ENCODE measurements at regions of chr2 and their contacts with region 1.

Region 1: GRCh38 chr2:64988420-64989125 is 626 bp upstream of the SLC1A4 start:
- DNase-seq: peak; percentile 62
- ATAC-seq: peak; percentile 43
- H3K4me3 Mint-ChIP-seq: peak overlapping the region; percentile 85
- H3K27ac Mint-ChIP-seq: peak overlapping the region; percentile 87
- H3K4me1 Mint-ChIP-seq: peaks cover 40% of the 10 kb centered on the region
- H3K27me3 Mint-ChIP-seq: no peaks in the 10 kb centered on the region
- CTCF ChIP-seq: no peak

Region 2: GRCh38 chr2:64192125-64192479 is 796.5 kb before region 1 on chr2:
- CTCF ChIA-PET with region 1: no interaction called
- POLR2A ChIA-PET with region 1: no interaction called
- intact Hi-C with region 1: no loop called
- DNase-seq: no peak
- ATAC-seq: peak; percentile 83
- H3K4me3 Mint-ChIP-seq: peak overlapping the region; percentile 50
- H3K27ac Mint-ChIP-seq: peak overlapping the region; percentile 50
- H3K4me1 Mint-ChIP-seq: peaks cover 41% of the 10 kb centered on the region
- H3K27me3 Mint-ChIP-seq: no peaks in the 10 kb centered on the region
- CTCF ChIP-seq: no peak

Region 3: DNA sequence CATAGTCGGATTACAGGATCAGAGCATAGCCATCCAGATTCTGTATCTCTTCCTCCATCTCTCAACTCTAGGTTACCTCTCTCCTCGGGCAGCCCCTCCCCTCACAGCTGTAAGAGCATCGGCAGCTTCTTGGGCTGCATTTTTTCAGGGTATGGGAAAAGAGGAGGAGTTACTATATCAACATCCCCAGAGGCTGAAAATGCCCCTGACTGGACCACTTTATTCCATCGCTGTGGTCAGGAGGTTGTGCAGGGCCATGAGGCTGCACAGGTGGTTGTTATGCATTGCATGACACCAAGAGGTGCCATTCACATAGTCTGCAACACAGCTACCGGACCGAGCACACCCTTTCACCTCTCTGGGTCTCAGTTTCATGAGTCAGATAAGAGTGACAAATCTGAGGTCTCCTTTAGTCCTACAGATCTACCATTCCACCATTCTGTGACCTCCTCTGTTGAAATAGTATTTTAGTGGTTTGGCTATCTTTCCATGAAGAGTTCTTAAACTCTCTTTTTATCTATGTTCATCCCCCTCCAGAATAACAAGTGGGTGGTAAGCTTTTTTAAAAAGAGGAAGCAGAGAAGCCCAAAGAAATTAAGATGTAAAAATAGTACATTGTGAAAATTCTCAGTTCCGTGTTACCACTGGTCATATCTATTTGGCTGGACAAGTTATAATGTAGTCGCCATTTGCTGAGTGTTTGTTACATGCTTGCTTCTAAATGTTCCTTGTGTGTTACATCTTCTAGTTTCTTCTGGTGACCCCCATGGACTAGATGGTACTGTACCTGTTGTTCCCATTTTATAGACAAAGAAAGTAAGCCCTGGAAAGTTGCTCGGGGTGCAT is 56.0 kb before region 1 on chr2:
- CTCF ChIA-PET with region 1: interaction called, 5 read pairs
- POLR2A ChIA-PET with region 1: interaction called, 47 read pairs
- intact Hi-C with region 1: loop called (anchors 1 kb)
- DNase-seq: no peak
- ATAC-seq: peak; percentile 81
- H3K4me3 Mint-ChIP-seq: peak overlapping the region; percentile 90
- H3K27ac Mint-ChIP-seq: peak overlapping the region; percentile 93
- H3K4me1 Mint-ChIP-seq: peaks cover 97% of the 10 kb centered on the region
- H3K27me3 Mint-ChIP-seq: no peaks in the 10 kb centered on the region
- CTCF ChIP-seq: no peak

Region 4: GRCh38 chr2:64945973-64946768 is 42.4 kb before region 1 on chr2:
- CTCF ChIA-PET with region 1: interaction called, 6 read pairs
- POLR2A ChIA-PET with region 1: interaction called, 35 read pairs
- intact Hi-C with region 1: loop called (anchors 1 kb)
- DNase-seq: peak; percentile 61
- ATAC-seq: peak; percentile 93
- H3K4me3 Mint-ChIP-seq: peak overlapping the region; percentile 78
- H3K27ac Mint-ChIP-seq: peak overlapping the region; percentile 93
- H3K4me1 Mint-ChIP-seq: peaks cover 69% of the 10 kb centered on the region
- H3K27me3 Mint-ChIP-seq: no peaks in the 10 kb centered on the region
- CTCF ChIP-seq: no peak

Region 5: DNA sequence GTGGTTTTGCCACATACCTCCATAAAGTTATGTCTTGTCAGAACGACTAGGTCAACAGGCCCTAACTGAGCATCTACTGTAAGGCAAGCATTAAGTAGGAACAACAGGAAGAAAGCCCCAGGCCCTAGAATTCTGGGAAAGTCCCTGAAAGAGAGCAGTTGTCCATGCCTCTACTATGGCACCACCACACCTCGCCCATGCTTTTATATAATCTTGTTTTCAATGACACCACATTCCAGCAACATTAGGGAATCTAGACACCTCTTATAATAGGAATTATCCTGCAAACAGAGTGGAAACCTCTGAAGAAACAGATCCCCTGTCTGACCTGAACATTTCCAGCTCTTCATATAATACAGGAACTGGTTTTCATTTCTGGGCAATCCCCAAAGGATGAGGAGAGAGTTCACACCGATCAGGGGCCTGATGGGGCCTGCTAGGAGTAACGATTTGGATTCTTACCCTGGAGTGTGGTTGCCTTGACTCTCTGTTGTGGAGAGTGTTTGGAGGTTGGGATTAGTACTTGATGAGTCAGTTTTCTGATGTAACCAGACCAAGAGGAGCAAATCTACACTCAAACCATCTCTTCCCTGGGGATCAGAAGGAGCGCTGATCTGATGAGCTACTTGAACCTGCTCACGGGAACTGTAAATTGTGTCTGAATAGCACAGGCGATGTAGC is 35.7 kb after region 1 on chr2:
- CTCF ChIA-PET with region 1: interaction called, 3 read pairs
- POLR2A ChIA-PET with region 1: interaction called, 76 read pairs
- intact Hi-C with region 1: loop called (anchors 1 kb)
- DNase-seq: no peak
- ATAC-seq: no peak
- H3K4me3 Mint-ChIP-seq: peak overlapping the region; percentile 29
- H3K27ac Mint-ChIP-seq: peak overlapping the region; percentile 63
- H3K4me1 Mint-ChIP-seq: peaks cover 58% of the 10 kb centered on the region
- H3K27me3 Mint-ChIP-seq: no peaks in the 10 kb centered on the region
- CTCF ChIP-seq: no peak

Region 6: DNA sequence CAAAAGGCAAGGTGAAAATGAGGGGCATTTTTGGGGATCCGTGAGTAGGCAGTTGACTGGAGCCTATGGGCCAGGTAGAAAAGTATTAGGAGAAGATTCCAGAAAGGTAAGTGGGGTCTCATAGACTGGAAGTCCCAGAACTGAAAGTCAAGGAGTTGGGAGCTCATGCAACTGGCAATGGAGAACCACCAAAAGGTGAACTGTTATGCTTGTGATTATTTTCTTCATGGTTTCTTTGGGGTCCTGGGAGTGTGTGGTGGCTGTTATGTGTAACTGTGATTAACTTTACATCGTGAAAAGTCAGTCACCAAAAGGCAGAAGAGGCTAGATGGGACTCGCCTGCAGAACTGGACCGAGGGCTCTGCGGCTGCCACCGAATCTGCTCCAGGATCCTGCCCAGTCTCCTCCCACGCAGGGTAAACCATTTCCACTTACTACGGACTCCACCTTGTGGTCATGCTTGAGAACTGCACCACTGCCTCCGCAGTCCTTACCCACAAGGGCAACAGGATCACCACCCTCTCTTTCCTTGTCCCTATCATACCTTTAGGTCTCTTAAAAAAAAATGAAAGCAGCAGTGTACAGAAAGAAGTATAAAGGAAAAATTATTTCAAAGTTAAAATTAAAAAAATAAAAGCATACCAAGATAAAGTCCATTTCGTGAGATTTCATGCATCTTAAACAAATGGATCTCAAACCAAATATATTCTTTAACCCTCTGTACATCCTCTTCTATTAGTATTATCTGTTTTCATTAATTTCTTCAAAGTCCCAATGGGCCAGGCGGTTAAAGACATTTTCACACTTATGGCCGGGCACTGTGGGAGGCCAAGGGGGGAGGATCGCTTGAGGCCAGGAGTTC is 52.1 kb after region 1 on chr2:
- CTCF ChIA-PET with region 1: interaction called, 3 read pairs
- POLR2A ChIA-PET with region 1: interaction called, 4 read pairs
- intact Hi-C with region 1: loop called (anchors 2 kb)
- DNase-seq: peak; percentile 59
- ATAC-seq: peak; percentile 99
- H3K4me3 Mint-ChIP-seq: no peak overlapping the region
- H3K27ac Mint-ChIP-seq: peak overlapping the region; percentile 20
- H3K4me1 Mint-ChIP-seq: peaks cover 11% of the 10 kb centered on the region
- H3K27me3 Mint-ChIP-seq: no peaks in the 10 kb centered on the region
- CTCF ChIP-seq: peak; percentile 55

Region 7: GRCh38 chr2:65116645-65117044 is 128.1 kb after region 1 on chr2:
- CTCF ChIA-PET with region 1: no interaction called
- POLR2A ChIA-PET with region 1: interaction called, 10 read pairs
- intact Hi-C with region 1: no loop called
- DNase-seq: no peak
- ATAC-seq: no peak
- H3K4me3 Mint-ChIP-seq: no peak overlapping the region
- H3K27ac Mint-ChIP-seq: no peak overlapping the region
- H3K4me1 Mint-ChIP-seq: peaks cover 70% of the 10 kb centered on the region
- H3K27me3 Mint-ChIP-seq: no peaks in the 10 kb centered on the region
- CTCF ChIP-seq: no peak

Region 8: DNA sequence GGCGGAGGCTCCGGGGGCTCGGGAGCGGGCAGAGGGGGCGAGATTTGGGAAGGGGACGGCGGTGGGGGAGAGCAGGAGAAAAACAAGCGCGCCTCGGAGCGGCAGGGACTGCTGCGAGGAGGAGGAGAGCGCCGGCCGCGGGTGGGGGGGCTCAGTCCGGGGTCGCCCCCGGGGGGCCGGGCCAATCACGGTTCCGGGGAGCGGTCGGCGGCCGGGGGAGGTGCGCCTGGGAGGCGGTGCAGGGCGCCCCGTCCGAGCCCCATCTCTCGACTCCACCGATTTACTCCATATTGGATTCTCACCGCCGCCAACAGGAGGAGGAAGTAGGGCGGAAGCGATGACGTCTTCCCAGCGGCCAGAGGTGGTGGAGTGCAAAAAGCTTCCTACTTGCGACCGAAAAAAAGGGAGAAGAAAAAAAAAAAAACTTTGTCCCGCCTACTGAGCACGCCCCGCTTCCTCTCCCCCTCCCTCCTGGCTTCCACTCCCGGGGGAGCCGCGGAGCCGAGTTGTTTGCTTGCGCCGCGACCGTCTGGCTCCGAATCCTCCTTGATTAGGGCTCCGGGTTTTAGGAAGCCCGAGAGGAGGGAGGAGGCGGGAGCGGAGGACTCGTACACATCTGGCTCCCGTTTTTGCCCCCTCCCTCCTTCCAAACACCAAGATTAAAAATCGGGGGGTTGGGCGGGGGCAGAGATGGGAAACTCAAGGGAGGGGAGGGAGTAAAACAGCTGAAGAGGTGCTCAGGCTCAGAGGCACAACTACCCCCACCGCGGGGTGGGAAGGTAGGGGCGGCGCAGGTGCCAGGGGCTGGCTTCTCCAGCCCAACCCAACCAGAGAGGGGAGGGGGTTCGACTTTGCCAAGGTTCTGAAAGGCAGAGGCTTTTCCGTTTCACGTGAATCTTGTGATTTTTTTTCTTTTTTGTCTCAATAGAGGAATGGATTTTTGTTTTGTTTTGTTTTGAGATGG is 443.9 kb after region 1 on chr2 and contains the start of gene SPRED2:
- CTCF ChIA-PET with region 1: no interaction called
- POLR2A ChIA-PET with region 1: no interaction called
- intact Hi-C with region 1: no loop called
- DNase-seq: peak; percentile 62
- ATAC-seq: peak; percentile 30
- H3K4me3 Mint-ChIP-seq: peak within 1 kb of the TSS; percentile 90
- H3K27ac Mint-ChIP-seq: peak within 1 kb of the TSS; percentile 69
- H3K4me1 Mint-ChIP-seq: peaks cover 23% of the 10 kb centered on the region
- H3K27me3 Mint-ChIP-seq: peaks cover 19% of the 10 kb centered on the region
- CTCF ChIP-seq: no peak
- total RNA-seq, gene SPRED2: 2.5 and 3.1 TPM in 2 replicates

Region 9: DNA sequence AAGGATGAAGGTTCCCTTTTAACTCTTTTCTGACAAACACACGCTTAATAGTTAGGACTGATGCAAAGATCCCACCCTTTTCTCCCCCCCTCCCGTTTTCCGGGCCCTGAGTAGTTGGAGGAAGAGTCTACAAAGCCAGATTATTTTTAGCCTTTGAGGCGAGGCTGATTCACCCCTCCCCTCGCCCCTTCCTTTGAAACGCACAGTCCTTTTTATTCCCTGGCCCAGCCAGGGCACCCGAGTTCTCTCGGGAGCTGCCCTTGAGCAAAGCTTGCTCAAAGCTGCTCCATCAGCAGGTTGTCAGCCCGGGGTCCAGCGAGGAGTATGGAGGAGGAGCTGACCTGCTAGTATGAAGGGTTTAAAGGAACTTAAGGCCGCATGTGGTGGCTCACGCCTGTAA is 491.0 kb after region 1 on chr2:
- CTCF ChIA-PET with region 1: no interaction called
- POLR2A ChIA-PET with region 1: no interaction called
- intact Hi-C with region 1: no loop called
- DNase-seq: no peak
- ATAC-seq: no peak
- H3K4me3 Mint-ChIP-seq: no peak overlapping the region
- H3K27ac Mint-ChIP-seq: no peak overlapping the region
- H3K4me1 Mint-ChIP-seq: no peaks in the 10 kb centered on the region
- H3K27me3 Mint-ChIP-seq: peaks cover 16% of the 10 kb centered on the region
- CTCF ChIP-seq: no peak

Measured in activated B cell treated with CpG ODN at 0.5 μM for 24 hours (primary cell).